ENCODE measurements at regions of chr11 and their contacts with region 1.

Region 1: GRCh38 chr11:93356547-93356946 is 26.0 kb downstream of the DEUP1 start:
- DNase-seq: no peak
- ATAC-seq: no peak
- H3K4me3 ChIP-seq: no peak overlapping the region
- H3K27ac ChIP-seq: no peak overlapping the region
- H3K4me1 ChIP-seq: no peaks in the 10 kb centered on the region
- H3K27me3 ChIP-seq: no peaks in the 10 kb centered on the region

Region 2: GRCh38 chr11:93295921-93296575 is 60.5 kb before region 1 on chr11:
- intact Hi-C with region 1: loop called in 1 of 4 experiments (anchors 10 kb)
- DNase-seq: no peak
- ATAC-seq: no peak
- H3K4me3 ChIP-seq: no peak overlapping the region
- H3K27ac ChIP-seq: no peak overlapping the region
- H3K4me1 ChIP-seq: no peaks in the 10 kb centered on the region
- H3K27me3 ChIP-seq: no peaks in the 10 kb centered on the region

Measured in right cardiac atrium (tissue), 5 donors.